ENCODE measurements at regions of chr1 and their contacts with region 1.

Region 1: GRCh38 chr1:156282479-156283222 is at the start of gene SMG5:
- DNase-seq: peak; percentile 97 to 99 (median 98)
- H3K4me3 ChIP-seq: peak within 1 kb of the TSS; percentile 93 to 96
- H3K4me3 Mint-ChIP-seq: peak within 1 kb of the TSS; percentile 90 to 99 (median 96)
- H3K27ac ChIP-seq: peak within 1 kb of the TSS; percentile 80
- H3K27ac Mint-ChIP-seq: peak within 1 kb of the TSS; percentile 90 to 99 (median 96)
- H3K4me1 ChIP-seq: peaks cover 38% of the 10 kb centered on the region
- H3K4me1 Mint-ChIP-seq: peaks cover 26 to 51% (median 36%) of the 10 kb centered on the region in 4 donors
- H3K27me3 ChIP-seq: no peaks in the 10 kb centered on the region
- H3K27me3 Mint-ChIP-seq: no peaks in the 10 kb centered on the region
- total RNA-seq, gene SMG5: 69.8 to 71.6 TPM

Region 2: DNA sequence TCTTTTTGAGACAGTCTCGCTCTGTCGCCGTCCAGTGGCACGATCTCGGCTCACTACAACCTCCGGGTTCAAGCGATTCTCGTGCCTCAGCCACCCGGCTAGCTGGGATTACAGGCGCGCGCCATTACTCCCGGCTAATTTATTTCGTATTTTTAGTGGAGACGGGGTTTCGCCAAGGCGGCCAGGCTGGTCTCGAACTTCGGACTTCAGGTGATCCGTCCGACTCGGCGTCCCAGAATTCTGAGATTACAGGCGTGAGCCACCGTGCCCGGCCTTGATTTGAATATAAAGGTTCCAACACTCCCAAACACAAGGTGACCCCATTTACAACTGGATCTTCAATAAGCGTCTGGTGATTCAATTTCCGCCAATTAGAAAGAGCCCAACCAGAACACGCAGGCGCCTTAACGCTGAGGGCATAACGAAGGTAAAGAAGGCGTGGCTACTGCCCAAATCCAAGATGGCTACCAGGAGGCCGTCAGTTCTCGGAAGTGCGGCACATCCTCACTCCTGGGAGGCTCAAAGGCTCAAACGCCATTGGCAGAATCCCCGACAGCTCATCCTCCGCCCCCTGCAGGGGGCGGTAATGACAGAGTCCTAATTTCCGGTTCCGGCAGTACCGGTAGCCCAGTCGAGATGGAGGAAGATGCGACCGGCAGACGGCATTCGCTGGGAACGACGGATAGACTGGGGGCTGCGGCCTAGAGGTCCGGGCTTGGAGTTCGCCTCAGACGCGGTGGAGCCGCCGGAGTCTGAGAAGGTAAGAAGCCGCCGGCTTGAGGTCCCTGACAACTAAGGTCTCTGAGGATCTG is 89.0 kb before region 1 on chr1 and contains the start of gene SLC25A44:
- CTCF ChIA-PET with region 1: no interaction called
- POLR2A ChIA-PET with region 1: interaction called, 5 read pairs
- intact Hi-C with region 1: loop called (anchors 1 kb)
- DNase-seq: peak; percentile 98 to 99 (median 98)
- H3K4me3 ChIP-seq: peak within 1 kb of the TSS; percentile 88 to 92
- H3K4me3 Mint-ChIP-seq: peak within 1 kb of the TSS; percentile 93 to 99 (median 96)
- H3K27ac ChIP-seq: peak within 1 kb of the TSS; percentile 79
- H3K27ac Mint-ChIP-seq: peak within 1 kb of the TSS; percentile 75 to 97 (median 96)
- H3K4me1 ChIP-seq: peaks cover 48% of the 10 kb centered on the region
- H3K4me1 Mint-ChIP-seq: peaks cover 26 to 58% (median 40%) of the 10 kb centered on the region in 4 donors
- H3K27me3 ChIP-seq: no peaks in the 10 kb centered on the region
- H3K27me3 Mint-ChIP-seq: no peaks in the 10 kb centered on the region
- total RNA-seq, gene SLC25A44: 21.2 to 23.3 TPM

Region 3: GRCh38 chr1:156245451-156246232 is 37.0 kb before region 1 on chr1:
- CTCF ChIA-PET with region 1: no interaction called
- POLR2A ChIA-PET with region 1: interaction called, 17 read pairs
- intact Hi-C with region 1: no loop called
- DNase-seq: peak in 4 of 5 donors; percentile 35 to 43 (median 35)
- H3K4me3 ChIP-seq: peak overlapping the region in 1 of 2 donors; percentile 58
- H3K4me3 Mint-ChIP-seq: peak overlapping the region; percentile 81 to 92 (median 84)
- H3K27ac ChIP-seq: no peak overlapping the region
- H3K27ac Mint-ChIP-seq: peak overlapping the region in 6 of 7 donors; percentile 20 to 87 (median 80)
- H3K4me1 ChIP-seq: peaks cover 17% of the 10 kb centered on the region
- H3K4me1 Mint-ChIP-seq: peaks cover 10 to 22% (median 16%) of the 10 kb centered on the region in 4 donors
- H3K27me3 ChIP-seq: no peaks in the 10 kb centered on the region
- H3K27me3 Mint-ChIP-seq: no peaks in the 10 kb centered on the region

Region 4: DNA sequence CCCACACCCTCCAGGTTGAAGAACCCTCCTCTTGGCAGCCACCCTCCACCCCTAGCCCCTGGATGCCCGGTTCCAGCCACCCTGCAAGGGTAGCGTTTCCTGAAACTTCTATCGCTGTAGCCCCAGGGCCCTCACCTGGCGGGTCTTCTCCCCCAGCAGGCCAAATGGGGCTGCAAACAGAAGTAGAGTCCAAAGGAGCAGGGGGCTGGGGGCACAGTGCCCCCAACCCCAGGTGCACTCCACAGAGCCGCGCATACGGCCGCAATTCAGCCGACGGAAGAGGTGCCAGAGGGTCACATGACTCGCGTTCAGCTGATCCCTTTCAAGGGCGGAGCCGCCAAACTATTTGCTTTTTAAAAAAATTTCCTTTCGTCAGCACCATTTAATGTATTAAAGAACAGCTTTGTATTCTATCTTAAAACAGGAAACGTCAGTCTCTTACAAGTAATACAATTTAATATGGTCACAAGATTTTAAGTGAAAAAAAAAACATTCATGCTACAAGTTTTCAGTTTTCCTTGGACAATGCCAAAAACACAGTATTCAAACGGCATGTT is 12.8 kb after region 1 on chr1 and contains the start of gene GLMP:
- CTCF ChIA-PET with region 1: no interaction called
- POLR2A ChIA-PET with region 1: interaction called, 50 read pairs
- intact Hi-C with region 1: no loop called
- DNase-seq: peak; percentile 55 to 64 (median 59)
- H3K4me3 ChIP-seq: peak within 1 kb of the TSS; percentile 77 to 83
- H3K4me3 Mint-ChIP-seq: peak within 1 kb of the TSS; percentile 89 to 95 (median 92)
- H3K27ac ChIP-seq: peak within 1 kb of the TSS; percentile 65
- H3K27ac Mint-ChIP-seq: peak within 1 kb of the TSS; percentile 18 to 91 (median 88)
- H3K4me1 ChIP-seq: peaks cover 17% of the 10 kb centered on the region
- H3K4me1 Mint-ChIP-seq: peaks cover 14 to 26% (median 17%) of the 10 kb centered on the region in 4 donors
- H3K27me3 ChIP-seq: no peaks in the 10 kb centered on the region
- H3K27me3 Mint-ChIP-seq: no peaks in the 10 kb centered on the region
- total RNA-seq, gene GLMP: 22.1 to 28.4 TPM

Region 5: GRCh38 chr1:156338180-156338973 is 55.7 kb after region 1 on chr1 and contains the starts of genes CCT3 and TSACC:
- CTCF ChIA-PET with region 1: no interaction called
- POLR2A ChIA-PET with region 1: interaction called, 27 read pairs
- intact Hi-C with region 1: loop called (anchors 1 kb)
- DNase-seq: peak; percentile 100
- H3K4me3 ChIP-seq: peak within 1 kb of the TSS; percentile 94 to 95
- H3K4me3 Mint-ChIP-seq: peak within 1 kb of the TSS; percentile 94 to 99 (median 98)
- H3K27ac ChIP-seq: peak within 1 kb of the TSS; percentile 75
- H3K27ac Mint-ChIP-seq: peak within 1 kb of the TSS; percentile 91 to 100 (median 99)
- H3K4me1 ChIP-seq: peaks cover 28% of the 10 kb centered on the region
- H3K4me1 Mint-ChIP-seq: peaks cover 22 to 46% (median 35%) of the 10 kb centered on the region in 4 donors
- H3K27me3 ChIP-seq: no peaks in the 10 kb centered on the region
- H3K27me3 Mint-ChIP-seq: peaks cover 0 to 1% of the 10 kb centered on the region in 2 donors
- total RNA-seq, gene CCT3: 109 TPM
- total RNA-seq, gene TSACC: not detected

Measured in CD4-positive, alpha-beta memory T cell (primary cell).